A673 (cell line): ENCODE measurements at regions of chr2 and their contacts with region 1.

Region 1: DNA sequence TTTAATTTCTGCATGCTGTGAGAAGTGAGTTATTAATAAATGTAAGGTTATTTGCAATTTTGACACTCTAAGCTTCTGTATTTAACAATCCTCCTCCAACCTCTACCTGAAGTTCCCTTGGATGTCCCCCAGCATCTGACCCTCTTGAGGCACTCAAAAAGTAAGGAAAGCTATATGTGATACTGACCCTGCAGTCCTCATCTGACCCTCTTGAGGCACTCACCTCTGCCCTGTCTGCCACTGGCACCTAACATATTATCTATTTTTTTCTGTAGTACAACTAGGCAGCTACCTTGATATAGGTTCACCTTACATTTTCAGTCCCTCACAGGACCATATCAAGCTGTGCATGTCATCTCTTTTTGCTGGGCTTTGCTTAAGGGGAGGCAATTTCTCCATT is 583.4 kb upstream of the PKDCC start:
- DNase-seq: no peak
- H3K4me3 ChIP-seq: no peak overlapping the region
- H3K27ac ChIP-seq: no peak overlapping the region
- H3K4me1 ChIP-seq: no peaks in the 10 kb centered on the region
- H3K27me3 ChIP-seq: no peaks in the 10 kb centered on the region
- CTCF ChIP-seq: no peak

Region 2: GRCh38 chr2:41621563-41621962 is 157.2 kb after region 1 on chr2:
- CTCF ChIA-PET with region 1: no interaction called
- POLR2A ChIA-PET with region 1: interaction called, 12 read pairs
- intact Hi-C with region 1: no loop called
- DNase-seq: no peak
- H3K4me3 ChIP-seq: no peak overlapping the region
- H3K27ac ChIP-seq: no peak overlapping the region
- H3K4me1 ChIP-seq: no peaks in the 10 kb centered on the region
- H3K27me3 ChIP-seq: peaks cover 71% of the 10 kb centered on the region
- CTCF ChIP-seq: no peak

Region 3: DNA sequence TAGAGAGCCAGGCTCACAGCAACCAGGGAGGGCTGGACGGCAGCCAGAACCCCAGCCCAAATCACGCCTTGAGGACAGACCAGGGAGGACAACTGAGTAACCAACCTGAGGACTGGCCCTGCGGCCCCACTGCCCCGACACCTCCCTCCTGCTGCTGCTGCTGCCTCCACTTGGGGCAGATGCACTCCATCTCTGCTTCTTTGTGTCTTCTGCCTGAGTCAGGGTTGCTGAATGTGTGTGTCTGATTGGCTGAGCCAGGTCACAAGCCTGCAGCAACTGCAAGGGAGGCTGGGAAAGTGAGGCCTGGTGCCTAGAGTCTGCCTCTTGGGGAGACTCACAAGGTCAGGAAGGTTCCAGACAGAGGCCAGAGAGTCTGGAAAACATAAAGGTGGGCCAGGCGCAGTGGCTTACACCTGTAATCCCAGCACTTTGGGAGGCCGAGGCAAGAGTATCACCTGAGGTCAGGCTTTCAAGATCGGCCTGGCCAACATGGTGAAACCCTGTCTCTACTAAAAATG is 1678.6 kb after region 1 on chr2:
- CTCF ChIA-PET with region 1: no interaction called
- POLR2A ChIA-PET with region 1: no interaction called
- intact Hi-C with region 1: no loop called
- DNase-seq: no peak
- H3K4me3 ChIP-seq: no peak overlapping the region
- H3K27ac ChIP-seq: no peak overlapping the region
- H3K4me1 ChIP-seq: no peaks in the 10 kb centered on the region
- H3K27me3 ChIP-seq: no peaks in the 10 kb centered on the region
- CTCF ChIP-seq: 0 out of 2 replicates have a peak, but pooled peaks have one; percentile 11